ENCODE measurements at regions of chr1 and their contacts with region 1.

Region 1: GRCh38 chr1:59699227-59699847 is 115.4 kb upstream of the HOOK1 start:
- DNase-seq: no peak
- ATAC-seq: peak; percentile 49
- H3K4me3 Mint-ChIP-seq: no peak overlapping the region
- H3K27ac Mint-ChIP-seq: peak overlapping the region; percentile 50
- H3K4me1 Mint-ChIP-seq: peaks cover 30% of the 10 kb centered on the region
- H3K27me3 Mint-ChIP-seq: no peaks in the 10 kb centered on the region
- CTCF ChIP-seq: peak; percentile 50

Region 2: GRCh38 chr1:58816072-58816746 is 883.1 kb before region 1 on chr1:
- CTCF ChIA-PET with region 1: no interaction called
- POLR2A ChIA-PET with region 1: no interaction called
- intact Hi-C with region 1: loop called (anchors 1 kb)
- DNase-seq: peak; percentile 85
- ATAC-seq: peak; percentile 91
- H3K4me3 Mint-ChIP-seq: peak overlapping the region; percentile 93
- H3K27ac Mint-ChIP-seq: peak overlapping the region; percentile 92
- H3K4me1 Mint-ChIP-seq: peaks cover 46% of the 10 kb centered on the region
- H3K27me3 Mint-ChIP-seq: no peaks in the 10 kb centered on the region
- CTCF ChIP-seq: no peak

Region 3: DNA sequence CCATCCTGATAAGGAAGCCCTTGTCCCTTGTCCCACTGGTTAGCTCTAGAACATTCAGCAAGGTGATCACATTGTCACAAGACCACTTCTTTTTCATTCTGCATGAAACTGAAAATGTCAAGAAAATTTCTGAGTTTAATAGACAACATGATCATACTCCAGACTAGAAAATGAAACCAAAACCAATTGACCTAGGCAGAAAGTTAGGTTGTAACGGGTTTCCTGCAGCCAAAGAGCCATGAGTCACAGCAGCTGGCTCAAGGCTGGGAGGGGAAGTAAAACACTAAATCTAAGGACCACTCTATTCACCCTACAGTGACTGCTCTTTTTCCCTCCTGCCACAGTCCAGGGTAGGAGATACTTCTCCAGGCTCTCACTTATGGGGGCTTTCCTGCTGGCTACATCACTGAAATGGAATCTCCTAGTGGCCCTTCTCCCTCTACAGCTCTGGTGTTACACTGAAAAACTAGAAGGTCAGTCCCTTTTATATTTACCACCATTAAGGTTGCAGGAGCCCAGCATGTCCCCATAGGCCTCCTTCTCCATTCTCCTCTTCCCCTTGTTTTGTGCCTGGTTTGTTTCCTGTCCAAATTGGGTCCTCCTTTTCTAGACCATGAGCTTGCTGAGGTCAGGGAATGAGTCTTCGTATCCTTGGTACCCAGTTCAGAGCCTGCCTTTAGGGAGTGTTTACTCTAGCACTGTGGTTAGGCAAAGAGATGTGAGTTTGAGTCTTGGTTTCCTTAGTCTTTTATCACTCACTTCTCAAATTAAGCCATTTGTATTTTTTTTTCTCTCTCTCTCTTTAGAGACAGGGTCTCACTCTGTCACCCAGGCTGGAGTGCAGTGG is 679.0 kb before region 1 on chr1:
- CTCF ChIA-PET with region 1: no interaction called
- POLR2A ChIA-PET with region 1: no interaction called
- intact Hi-C with region 1: loop called (anchors 5 kb)
- DNase-seq: no peak
- ATAC-seq: peak; percentile 96
- H3K4me3 Mint-ChIP-seq: peak overlapping the region; percentile 77
- H3K27ac Mint-ChIP-seq: peak overlapping the region; percentile 91
- H3K4me1 Mint-ChIP-seq: peaks cover 52% of the 10 kb centered on the region
- H3K27me3 Mint-ChIP-seq: no peaks in the 10 kb centered on the region
- CTCF ChIP-seq: no peak

Region 4: DNA sequence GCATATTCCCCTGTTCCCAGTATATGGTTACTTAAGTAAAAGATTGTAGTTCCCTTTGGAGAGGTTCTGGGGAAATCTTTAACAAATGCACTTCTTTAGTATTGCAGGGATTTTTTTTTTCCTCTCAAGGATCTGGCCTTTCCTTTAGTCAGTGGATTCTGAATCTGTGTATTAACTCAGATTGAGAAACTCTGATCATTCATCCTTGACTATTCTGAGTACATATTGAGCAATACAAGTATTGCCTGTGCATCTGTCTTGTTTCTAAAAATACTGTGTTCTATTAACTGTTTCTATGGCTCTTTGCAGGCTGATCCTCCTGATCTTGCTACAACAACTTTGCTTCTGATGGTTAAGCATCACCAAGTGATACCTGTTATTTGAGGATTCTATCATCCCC is 470.2 kb before region 1 on chr1:
- CTCF ChIA-PET with region 1: interaction called, 7 read pairs
- POLR2A ChIA-PET with region 1: no interaction called
- intact Hi-C with region 1: loop called (anchors 1 kb)
- DNase-seq: no peak
- ATAC-seq: no peak
- H3K4me3 Mint-ChIP-seq: no peak overlapping the region
- H3K27ac Mint-ChIP-seq: no peak overlapping the region
- H3K4me1 Mint-ChIP-seq: no peaks in the 10 kb centered on the region
- H3K27me3 Mint-ChIP-seq: no peaks in the 10 kb centered on the region
- CTCF ChIP-seq: no peak

Region 5: GRCh38 chr1:59506952-59507351 is 192.4 kb before region 1 on chr1:
- CTCF ChIA-PET with region 1: no interaction called
- POLR2A ChIA-PET with region 1: no interaction called
- intact Hi-C with region 1: loop called (anchors 5 kb)
- DNase-seq: no peak
- ATAC-seq: peak; percentile 94
- H3K4me3 Mint-ChIP-seq: no peak overlapping the region
- H3K27ac Mint-ChIP-seq: peak overlapping the region; percentile 19
- H3K4me1 Mint-ChIP-seq: peaks cover 12% of the 10 kb centered on the region
- H3K27me3 Mint-ChIP-seq: no peaks in the 10 kb centered on the region
- CTCF ChIP-seq: no peak

Region 6: DNA sequence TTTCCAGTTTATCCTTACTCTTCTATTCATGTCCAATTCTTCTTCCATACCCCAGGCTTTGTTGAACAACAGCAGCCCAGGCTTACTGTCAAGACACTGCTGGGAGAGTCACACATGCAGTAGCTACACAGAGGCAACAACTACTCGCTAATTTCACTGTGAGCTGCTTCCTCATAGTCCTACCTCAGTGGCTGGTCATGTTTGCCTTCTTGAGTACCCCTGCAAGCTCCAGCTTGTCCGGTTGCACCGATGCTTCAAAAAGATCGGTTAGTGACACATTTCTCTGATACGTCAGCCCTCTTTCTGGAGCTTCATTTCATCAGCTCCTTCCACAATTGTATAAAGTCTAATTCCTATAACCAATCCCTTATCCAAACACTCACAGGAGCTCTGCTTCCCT is 1136.3 kb after region 1 on chr1:
- CTCF ChIA-PET with region 1: no interaction called
- POLR2A ChIA-PET with region 1: no interaction called
- intact Hi-C with region 1: no loop called
- DNase-seq: no peak
- ATAC-seq: no peak
- H3K4me3 Mint-ChIP-seq: no peak overlapping the region
- H3K27ac Mint-ChIP-seq: no peak overlapping the region
- H3K4me1 Mint-ChIP-seq: no peaks in the 10 kb centered on the region
- H3K27me3 Mint-ChIP-seq: no peaks in the 10 kb centered on the region
- CTCF ChIP-seq: no peak

Measured in activated B cell treated with CpG ODN at 0.5 μM for 24 hours (primary cell).